Activated T-helper 1 cell treated with anti-CD3 and anti-CD28 coated beads, Interleukin-12 subunit alpha, Interleukin-12 subunit beta, Interleukin-2, Interleukin-4 antibody, amounts not matched to agents 30 ng/mL and 10 ng/mL and 1 ng/mL, durations not matched to agents 14 hours and 24 hours and 36 hours (primary cell): ENCODE measurements at regions of chr22 and their contacts with region 1.

Region 1: GRCh38 chr22:29267858-29268417 is at the starts of genes EWSR1 and RHBDD3:
- DNase-seq: peak; percentile 97
- H3K4me3 Mint-ChIP-seq: peak within 1 kb of the TSS; percentile 96
- H3K27ac Mint-ChIP-seq: peak within 1 kb of the TSS; percentile 99
- H3K4me1 Mint-ChIP-seq: peaks cover 49% of the 10 kb centered on the region
- H3K27me3 Mint-ChIP-seq: no peaks in the 10 kb centered on the region
- total RNA-seq, gene EWSR1: 454 and 463 TPM in 2 replicates
- total RNA-seq, gene RHBDD3: 53.3 and 59.4 TPM in 2 replicates

Region 2: GRCh38 chr22:29245637-29246385 is 22.1 kb before region 1 on chr22:
- intact Hi-C with region 1: no loop called
- DNase-seq: peak; percentile 55
- H3K4me3 Mint-ChIP-seq: no peak overlapping the region
- H3K27ac Mint-ChIP-seq: no peak overlapping the region
- H3K4me1 Mint-ChIP-seq: no peaks in the 10 kb centered on the region
- H3K27me3 Mint-ChIP-seq: peaks cover 14% of the 10 kb centered on the region

Region 3: DNA sequence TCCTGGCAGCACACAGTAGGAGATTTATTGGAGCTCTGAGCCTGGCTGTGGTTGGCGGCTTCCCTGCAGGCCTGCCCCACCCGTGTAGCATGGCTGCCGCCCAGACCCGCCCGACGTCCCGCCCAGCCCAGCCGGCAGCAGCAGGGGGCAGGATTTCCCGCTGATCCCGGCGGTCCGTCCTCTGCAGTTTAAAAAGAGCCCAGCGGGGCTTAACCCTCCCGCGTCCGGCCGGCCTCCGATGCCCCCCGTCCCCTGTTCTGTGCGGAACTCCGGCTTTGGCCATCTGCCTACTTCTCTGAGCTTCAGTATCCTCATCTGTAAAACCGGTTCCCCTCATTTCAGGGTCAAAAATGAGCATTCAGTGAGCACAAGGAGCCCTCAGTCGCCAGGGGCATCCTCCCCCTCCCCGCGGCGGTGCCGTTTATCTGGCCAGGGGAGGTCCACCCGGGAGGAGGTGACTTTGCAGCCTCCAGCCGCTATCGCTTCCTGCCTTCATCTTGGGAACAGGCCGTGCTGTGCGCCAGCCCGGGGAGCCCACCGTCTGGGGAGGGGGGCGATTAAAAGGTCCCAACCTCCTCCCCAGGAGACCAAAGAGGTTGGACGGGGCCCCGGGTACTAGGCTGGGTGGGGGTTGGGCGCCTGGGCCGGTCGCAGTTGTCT is 38.4 kb after region 1 on chr22 and contains the start of gene GAS2L1:
- intact Hi-C with region 1: loop called (anchors 2 kb)
- DNase-seq: peak; percentile 37
- H3K4me3 Mint-ChIP-seq: peak within 1 kb of the TSS; percentile 81
- H3K27ac Mint-ChIP-seq: peak within 1 kb of the TSS; percentile 58
- H3K4me1 Mint-ChIP-seq: no peaks in the 10 kb centered on the region
- H3K27me3 Mint-ChIP-seq: peaks cover 4% of the 10 kb centered on the region
- total RNA-seq, gene GAS2L1: 2.6 and 3.2 TPM in 2 replicates